Naive thymus-derived CD4-positive, alpha-beta T cell (primary cell): ENCODE measurements at regions of chr1 and their contacts with region 1.

Region 1: GRCh38 chr1:54355931-54356679 is 50.1 kb downstream of the SSBP3 start:
- DNase-seq: peak in 7 of 9 donors; percentile 7 to 31 (median 24)
- ATAC-seq: peak; percentile 12
- H3K4me3 ChIP-seq: peak overlapping the region; percentile 56
- H3K4me3 Mint-ChIP-seq: peak overlapping the region; percentile 86 to 98 (median 91)
- H3K27ac ChIP-seq: peak overlapping the region; percentile 76
- H3K27ac Mint-ChIP-seq: peak overlapping the region; percentile 87 to 99 (median 97)
- H3K4me1 ChIP-seq: peaks cover 3 to 67% of the 10 kb centered on the region in 2 donors
- H3K4me1 Mint-ChIP-seq: peaks cover 72 to 97% (median 94%) of the 10 kb centered on the region in 7 donors
- H3K27me3 ChIP-seq: no peaks in the 10 kb centered on the region
- H3K27me3 Mint-ChIP-seq: no peaks in the 10 kb centered on the region

Region 2: GRCh38 chr1:53014791-53015507 is 1341.2 kb before region 1 on chr1:
- CTCF ChIA-PET with region 1: no interaction called
- POLR2A ChIA-PET with region 1: no interaction called
- intact Hi-C with region 1: no loop called
- DNase-seq: peak; percentile 27 to 91 (median 84)
- ATAC-seq: peak; percentile 100
- H3K4me3 ChIP-seq: peak overlapping the region; percentile 65
- H3K4me3 Mint-ChIP-seq: peak overlapping the region; percentile 81 to 96 (median 90)
- H3K27ac ChIP-seq: peak overlapping the region; percentile 57
- H3K27ac Mint-ChIP-seq: peak overlapping the region; percentile 57 to 92 (median 84)
- H3K4me1 ChIP-seq: peaks cover 14 to 16% of the 10 kb centered on the region in 2 donors
- H3K4me1 Mint-ChIP-seq: peaks cover 20 to 48% (median 40%) of the 10 kb centered on the region in 7 donors
- H3K27me3 ChIP-seq: no peaks in the 10 kb centered on the region
- H3K27me3 Mint-ChIP-seq: no peaks in the 10 kb centered on the region

Region 3: DNA sequence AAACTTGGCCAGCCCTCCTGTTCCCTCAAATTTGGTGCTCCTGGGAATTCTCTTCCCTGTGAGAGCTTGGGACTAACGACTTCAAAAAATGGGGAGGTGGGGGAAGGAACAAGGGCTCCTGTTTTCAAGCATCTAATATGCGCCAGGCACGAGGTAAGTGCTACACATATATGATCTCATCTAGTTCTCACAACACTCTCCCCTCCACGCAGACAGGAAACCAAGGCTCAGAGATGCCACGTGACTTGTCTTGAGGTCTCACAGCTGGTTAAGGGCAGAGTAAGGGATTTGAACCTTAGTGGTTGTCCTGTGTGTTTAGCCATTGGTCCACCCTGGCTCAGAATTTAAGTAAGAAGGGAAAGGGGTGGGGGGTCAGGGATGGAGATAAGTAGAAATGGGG is 771.0 kb before region 1 on chr1:
- CTCF ChIA-PET with region 1: no interaction called
- POLR2A ChIA-PET with region 1: no interaction called
- intact Hi-C with region 1: no loop called
- DNase-seq: peak in 8 of 9 donors; percentile 8 to 34 (median 30)
- ATAC-seq: peak; percentile 63
- H3K4me3 ChIP-seq: no peak overlapping the region
- H3K4me3 Mint-ChIP-seq: peak overlapping the region in 1 of 10 donors; percentile 8
- H3K27ac ChIP-seq: no peak overlapping the region
- H3K27ac Mint-ChIP-seq: peak overlapping the region in 5 of 9 donors; percentile 23 to 64 (median 45)
- H3K4me1 ChIP-seq: peaks cover 5 to 43% of the 10 kb centered on the region in 2 donors
- H3K4me1 Mint-ChIP-seq: peaks cover 5 to 17% (median 11%) of the 10 kb centered on the region in 7 donors
- H3K27me3 ChIP-seq: no peaks in the 10 kb centered on the region
- H3K27me3 Mint-ChIP-seq: peaks cover 0 to 14% (median 0%) of the 10 kb centered on the region in 5 donors

Region 4: DNA sequence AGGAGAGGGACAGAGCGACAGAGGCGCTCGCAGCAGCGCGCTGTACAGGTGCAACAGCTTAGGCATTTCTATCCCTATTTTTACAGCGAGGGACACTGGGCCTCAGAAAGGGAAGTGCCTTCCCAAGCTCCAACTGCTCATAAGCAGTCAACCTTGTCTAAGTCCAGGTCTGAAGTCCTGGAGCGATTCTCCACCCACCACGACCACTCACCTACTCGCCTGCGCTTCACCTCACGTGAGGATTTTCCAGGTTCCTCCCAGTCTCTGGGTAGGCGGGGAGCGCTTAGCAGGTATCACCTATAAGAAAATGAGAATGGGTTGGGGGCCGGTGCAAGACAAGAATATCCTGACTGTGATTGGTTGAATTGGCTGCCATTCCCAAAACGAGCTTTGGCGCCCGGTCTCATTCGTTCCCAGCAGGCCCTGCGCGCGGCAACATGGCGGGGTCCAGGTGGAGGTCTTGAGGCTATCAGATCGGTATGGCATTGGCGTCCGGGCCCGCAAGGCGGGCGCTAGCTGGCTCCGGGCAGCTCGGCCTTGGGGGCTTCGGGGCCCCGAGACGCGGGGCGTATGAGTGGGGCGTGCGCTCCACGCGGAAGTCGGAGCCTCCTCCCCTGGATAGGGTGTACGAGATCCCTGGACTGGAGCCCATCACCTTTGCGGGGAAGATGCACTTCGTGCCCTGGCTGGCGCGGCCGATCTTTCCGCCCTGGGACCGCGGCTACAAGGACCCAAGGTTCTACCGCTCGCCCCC is 156.2 kb before region 1 on chr1 and contains the starts of genes CYB5RL and MRPL37:
- CTCF ChIA-PET with region 1: interaction called, 3 read pairs
- POLR2A ChIA-PET with region 1: no interaction called
- intact Hi-C with region 1: loop called (anchors 2 to 5 kb)
- DNase-seq: peak; percentile 65 to 94 (median 91)
- ATAC-seq: peak; percentile 99
- H3K4me3 ChIP-seq: peak within 1 kb of the TSS; percentile 69
- H3K4me3 Mint-ChIP-seq: peak within 1 kb of the TSS; percentile 90 to 96 (median 92)
- H3K27ac ChIP-seq: peak within 1 kb of the TSS; percentile 81
- H3K27ac Mint-ChIP-seq: peak within 1 kb of the TSS; percentile 64 to 93 (median 87)
- H3K4me1 ChIP-seq: peaks cover 9 to 17% of the 10 kb centered on the region in 2 donors
- H3K4me1 Mint-ChIP-seq: peaks cover 27 to 44% (median 40%) of the 10 kb centered on the region in 7 donors
- H3K27me3 ChIP-seq: no peaks in the 10 kb centered on the region
- H3K27me3 Mint-ChIP-seq: no peaks in the 10 kb centered on the region
- total RNA-seq, gene CYB5RL: 5.1 to 13.5 (median 7.1) TPM
- total RNA-seq, gene MRPL37: 25.4 to 86.7 (median 36.4) TPM

Region 5: GRCh38 chr1:54287176-54287650 is 68.9 kb before region 1 on chr1:
- CTCF ChIA-PET with region 1: no interaction called
- POLR2A ChIA-PET with region 1: interaction called, 3 read pairs
- intact Hi-C with region 1: loop called (anchors 1 kb)
- DNase-seq: peak; percentile 21 to 82 (median 73)
- ATAC-seq: peak; percentile 76
- H3K4me3 ChIP-seq: peak overlapping the region; percentile 21
- H3K4me3 Mint-ChIP-seq: peak overlapping the region; percentile 79 to 90 (median 87)
- H3K27ac ChIP-seq: peak overlapping the region; percentile 85
- H3K27ac Mint-ChIP-seq: peak overlapping the region; percentile 87 to 99 (median 96)
- H3K4me1 ChIP-seq: peaks cover 6 to 90% of the 10 kb centered on the region in 2 donors
- H3K4me1 Mint-ChIP-seq: peaks cover 59 to 100% (median 94%) of the 10 kb centered on the region in 7 donors
- H3K27me3 ChIP-seq: no peaks in the 10 kb centered on the region
- H3K27me3 Mint-ChIP-seq: no peaks in the 10 kb centered on the region

Region 6: GRCh38 chr1:54335755-54336108 is 20.4 kb before region 1 on chr1:
- CTCF ChIA-PET with region 1: no interaction called
- POLR2A ChIA-PET with region 1: no interaction called
- intact Hi-C with region 1: no loop called
- DNase-seq: no peak
- ATAC-seq: no peak
- H3K4me3 ChIP-seq: no peak overlapping the region
- H3K4me3 Mint-ChIP-seq: no peak overlapping the region
- H3K27ac ChIP-seq: no peak overlapping the region
- H3K27ac Mint-ChIP-seq: peak overlapping the region in 7 of 9 donors; percentile 6 to 67 (median 56)
- H3K4me1 ChIP-seq: peaks cover 0 to 27% of the 10 kb centered on the region in 2 donors
- H3K4me1 Mint-ChIP-seq: peaks cover 42 to 94% (median 78%) of the 10 kb centered on the region in 7 donors
- H3K27me3 ChIP-seq: no peaks in the 10 kb centered on the region
- H3K27me3 Mint-ChIP-seq: no peaks in the 10 kb centered on the region

Region 7: DNA sequence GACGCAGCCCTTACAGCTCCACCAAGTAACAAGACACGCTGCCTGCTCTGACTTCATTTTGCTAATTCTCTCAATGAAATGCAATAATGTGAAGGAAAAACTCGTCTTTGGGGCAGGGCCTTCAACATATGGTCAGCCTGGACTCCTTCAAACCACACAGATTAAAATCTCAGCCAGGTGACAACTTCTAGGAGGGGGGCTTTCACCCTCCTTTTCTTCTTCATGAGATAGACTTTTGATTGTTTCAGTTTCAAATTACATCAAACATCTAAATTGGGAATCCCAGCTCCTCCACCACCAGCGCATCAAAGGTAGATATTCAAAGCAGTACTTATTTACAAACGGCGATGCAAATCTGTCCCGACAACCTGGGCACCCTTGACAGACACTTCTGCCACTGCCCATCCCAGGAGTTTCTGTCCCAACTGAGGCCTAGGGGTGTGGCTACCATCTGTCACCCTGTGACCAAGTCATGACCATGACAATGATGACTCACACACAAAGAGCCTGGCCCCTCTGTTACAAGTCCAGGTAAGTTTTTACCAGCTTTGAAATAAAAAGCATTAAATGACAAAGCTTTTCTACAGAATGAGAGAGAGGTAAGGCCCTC is 20.4 kb after region 1 on chr1:
- CTCF ChIA-PET with region 1: interaction called, 3 read pairs
- POLR2A ChIA-PET with region 1: no interaction called
- intact Hi-C with region 1: loop called in 1 of 2 experiments (anchors 2 kb)
- DNase-seq: peak in 3 of 9 donors; percentile 14 to 34 (median 30)
- ATAC-seq: peak; percentile 45
- H3K4me3 ChIP-seq: no peak overlapping the region
- H3K4me3 Mint-ChIP-seq: peak overlapping the region; percentile 11 to 65 (median 45)
- H3K27ac ChIP-seq: no peak overlapping the region
- H3K27ac Mint-ChIP-seq: peak overlapping the region; percentile 58 to 94 (median 76)
- H3K4me1 ChIP-seq: peaks cover 15 to 51% of the 10 kb centered on the region in 2 donors
- H3K4me1 Mint-ChIP-seq: peaks cover 68 to 98% (median 91%) of the 10 kb centered on the region in 7 donors
- H3K27me3 ChIP-seq: no peaks in the 10 kb centered on the region
- H3K27me3 Mint-ChIP-seq: no peaks in the 10 kb centered on the region

Region 8: GRCh38 chr1:54459726-54460191 is 103.7 kb after region 1 on chr1:
- CTCF ChIA-PET with region 1: no interaction called
- POLR2A ChIA-PET with region 1: no interaction called
- intact Hi-C with region 1: no loop called
- DNase-seq: peak in 3 of 9 donors; percentile 18 to 31 (median 30)
- ATAC-seq: no peak
- H3K4me3 ChIP-seq: peak overlapping the region; percentile 23
- H3K4me3 Mint-ChIP-seq: peak overlapping the region in 9 of 10 donors; percentile 29 to 83 (median 73)
- H3K27ac ChIP-seq: peak overlapping the region; percentile 64
- H3K27ac Mint-ChIP-seq: peak overlapping the region; percentile 49 to 98 (median 91)
- H3K4me1 ChIP-seq: peaks cover 24 to 37% of the 10 kb centered on the region in 2 donors
- H3K4me1 Mint-ChIP-seq: peaks cover 15 to 49% (median 39%) of the 10 kb centered on the region in 7 donors
- H3K27me3 ChIP-seq: no peaks in the 10 kb centered on the region
- H3K27me3 Mint-ChIP-seq: peaks cover 0 to 2% (median 0%) of the 10 kb centered on the region in 5 donors